PC-9 (cell line): ENCODE measurements at regions of chr7 and their contacts with region 1.

Region 1: DNA sequence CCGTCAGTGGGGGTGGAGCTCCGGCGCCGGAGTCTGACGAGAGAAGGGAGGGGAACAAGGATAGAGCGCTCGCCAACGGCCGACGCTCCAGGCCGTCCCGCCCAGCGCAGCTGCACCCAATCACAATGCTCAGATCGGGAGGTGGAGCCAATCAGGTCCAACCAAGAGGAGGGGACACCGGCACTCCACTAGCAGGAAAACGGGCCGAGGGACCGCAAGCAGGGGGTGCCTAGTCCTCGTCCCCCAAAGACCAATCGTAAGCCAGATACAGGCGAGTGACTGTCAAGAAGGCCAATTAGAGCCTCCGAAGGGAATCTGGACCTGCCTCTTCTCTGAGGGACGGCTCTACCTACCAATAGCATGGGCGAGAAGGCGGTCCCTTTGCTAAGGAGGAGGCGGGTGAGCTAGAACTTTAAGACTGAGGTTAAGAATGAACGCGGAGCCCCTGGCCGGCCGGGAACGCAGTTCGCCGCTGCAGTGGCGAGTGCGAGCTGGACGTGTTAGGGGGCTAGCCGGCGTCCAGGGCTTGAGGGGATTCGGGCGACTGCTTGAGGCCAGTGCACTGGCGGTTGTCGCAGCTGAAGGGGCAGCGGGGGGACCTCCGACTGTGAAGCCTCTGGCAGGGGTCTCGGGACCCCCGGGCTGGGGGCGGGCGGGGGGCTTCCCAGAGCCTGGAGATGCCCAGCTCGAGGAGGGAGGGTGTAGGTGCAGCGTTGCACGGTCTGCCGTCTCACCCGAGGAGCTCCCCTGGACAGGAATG is at the start of gene FBXO24:
- DNase-seq: peak; percentile 99 to 100
- H3K4me3 ChIP-seq: peak within 1 kb of the TSS; percentile 60
- H3K27ac ChIP-seq: peak within 1 kb of the TSS; percentile 75
- H3K4me1 ChIP-seq: peaks cover 19% of the 10 kb centered on the region
- H3K27me3 ChIP-seq: no peaks in the 10 kb centered on the region
- CTCF ChIP-seq: no peak
- total RNA-seq, gene FBXO24: 2.7 and 4.6 TPM in 2 replicates

Region 2: DNA sequence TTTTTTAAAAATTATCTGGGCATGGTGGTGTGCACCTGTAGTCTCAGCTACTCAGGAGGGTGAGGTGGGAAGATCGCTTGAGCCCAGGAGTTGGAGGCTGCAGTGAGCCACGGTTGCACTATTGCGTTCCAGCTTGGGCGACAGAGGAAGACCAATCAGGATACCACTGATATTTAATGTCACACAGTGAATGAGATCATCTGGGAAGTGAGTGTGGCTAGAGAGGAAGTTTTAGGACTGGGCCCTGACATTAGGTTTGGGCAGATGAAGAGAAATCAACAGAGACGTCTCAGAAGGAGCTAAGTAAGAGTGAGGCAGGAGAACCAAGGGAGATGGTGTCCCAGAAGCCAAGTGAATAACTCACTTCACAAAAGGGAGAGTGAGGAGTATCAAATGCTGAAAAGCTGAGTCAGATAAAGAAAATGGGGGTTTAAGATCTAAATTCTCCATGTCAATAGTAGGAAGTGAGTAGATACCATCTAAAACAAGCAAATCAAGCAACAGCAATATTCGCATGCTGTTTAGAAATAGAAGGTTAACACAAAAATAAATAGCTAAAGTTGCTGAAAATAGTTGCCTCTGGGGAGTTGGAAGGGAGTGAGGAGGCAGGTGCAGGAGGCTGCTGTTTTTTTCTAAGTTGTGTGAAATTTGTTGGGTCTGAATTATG is 201.7 kb before region 1 on chr7:
- CTCF ChIA-PET with region 1: no interaction called
- POLR2A ChIA-PET with region 1: no interaction called
- intact Hi-C with region 1: no loop called
- DNase-seq: no peak
- H3K4me3 ChIP-seq: no peak overlapping the region
- H3K27ac ChIP-seq: no peak overlapping the region
- H3K4me1 ChIP-seq: no peaks in the 10 kb centered on the region
- H3K27me3 ChIP-seq: peaks cover 3% of the 10 kb centered on the region; the same call in 1 of the 2 replicates
- CTCF ChIP-seq: no peak

Region 3: DNA sequence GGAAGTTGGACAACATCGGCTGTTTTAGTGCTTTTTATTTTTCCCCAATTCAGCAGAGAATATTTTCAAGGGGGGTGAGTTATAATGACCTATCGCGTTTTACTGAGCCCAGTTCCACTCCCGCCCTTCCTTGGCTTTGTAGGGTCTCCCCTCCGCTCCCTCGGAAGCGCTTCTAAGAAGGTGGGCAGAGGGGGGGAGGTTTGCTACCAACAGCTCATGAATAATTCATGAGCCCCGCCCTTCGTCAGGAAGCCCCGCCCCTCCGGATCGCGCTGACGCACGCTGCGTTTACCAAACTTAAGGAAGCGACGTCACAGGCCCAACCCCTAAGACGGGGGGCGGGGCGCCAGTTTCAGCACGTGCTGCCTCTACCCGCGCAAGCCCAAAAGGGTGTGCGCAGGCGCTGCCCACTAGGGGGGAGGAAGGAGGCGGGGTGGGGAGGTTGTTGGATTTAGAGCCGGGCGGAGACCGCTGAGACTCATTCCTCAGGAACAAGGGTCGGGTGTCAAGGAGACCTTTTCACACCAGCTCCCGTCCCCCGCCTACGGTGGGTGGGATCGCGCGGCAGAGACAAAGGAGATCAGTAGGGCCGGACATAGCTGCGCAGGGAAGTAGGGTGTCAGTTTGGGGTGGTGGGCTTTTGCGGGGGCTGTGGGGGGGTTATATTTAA is 157.3 kb before region 1 on chr7:
- CTCF ChIA-PET with region 1: interaction called, 5 read pairs
- POLR2A ChIA-PET with region 1: interaction called, 22 read pairs
- intact Hi-C with region 1: no loop called
- DNase-seq: peak; percentile 97 to 100
- H3K4me3 ChIP-seq: peak overlapping the region; percentile 66
- H3K27ac ChIP-seq: peak overlapping the region; percentile 93
- H3K4me1 ChIP-seq: peaks cover 37% of the 10 kb centered on the region
- H3K27me3 ChIP-seq: no peaks in the 10 kb centered on the region
- CTCF ChIP-seq: no peak; the same call in 1 of the 2 replicates

Region 4: GRCh38 chr7:100489824-100490223 is 96.6 kb before region 1 on chr7:
- CTCF ChIA-PET with region 1: no interaction called
- POLR2A ChIA-PET with region 1: no interaction called
- intact Hi-C with region 1: no loop called
- DNase-seq: peak; percentile 40 to 63
- H3K4me3 ChIP-seq: no peak overlapping the region
- H3K27ac ChIP-seq: no peak overlapping the region
- H3K4me1 ChIP-seq: no peaks in the 10 kb centered on the region
- H3K27me3 ChIP-seq: no peaks in the 10 kb centered on the region
- CTCF ChIP-seq: no peak

Region 5: GRCh38 chr7:100556541-100556940 is 29.9 kb before region 1 on chr7:
- CTCF ChIA-PET with region 1: interaction called, 11 read pairs
- POLR2A ChIA-PET with region 1: interaction called, 18 read pairs
- intact Hi-C with region 1: no loop called
- DNase-seq: no peak
- H3K4me3 ChIP-seq: no peak overlapping the region
- H3K27ac ChIP-seq: no peak overlapping the region
- H3K4me1 ChIP-seq: 0 out of 2 replicates have a peak, but pooled peaks cover 8% of the 10 kb centered on the region
- H3K27me3 ChIP-seq: no peaks in the 10 kb centered on the region
- CTCF ChIP-seq: no peak

Region 6: GRCh38 chr7:100604028-100604975 is 17.9 kb after region 1 on chr7:
- CTCF ChIA-PET with region 1: interaction called, 22 read pairs
- POLR2A ChIA-PET with region 1: interaction called, 8 read pairs
- intact Hi-C with region 1: loop called (anchors 2 kb)
- DNase-seq: peak; percentile 54 to 84
- H3K4me3 ChIP-seq: peak overlapping the region; percentile 75
- H3K27ac ChIP-seq: no peak overlapping the region
- H3K4me1 ChIP-seq: peaks cover 24% of the 10 kb centered on the region
- H3K27me3 ChIP-seq: no peaks in the 10 kb centered on the region
- CTCF ChIP-seq: peak; percentile 72; the same call in 1 of the 2 replicates

Region 7: GRCh38 chr7:100673300-100673941 is 87.0 kb after region 1 on chr7 and contains the start of gene GNB2:
- CTCF ChIA-PET with region 1: interaction called, 3 read pairs
- POLR2A ChIA-PET with region 1: interaction called, 4 read pairs
- intact Hi-C with region 1: loop called (anchors 1 kb)
- DNase-seq: peak; percentile 93 to 100
- H3K4me3 ChIP-seq: peak within 1 kb of the TSS; percentile 99
- H3K27ac ChIP-seq: peak within 1 kb of the TSS; percentile 75
- H3K4me1 ChIP-seq: no peaks in the 10 kb centered on the region; the same call in 1 of the 2 replicates
- H3K27me3 ChIP-seq: no peaks in the 10 kb centered on the region
- CTCF ChIP-seq: no peak
- total RNA-seq, gene GNB2: 299 and 326 TPM in 2 replicates

Region 8: DNA sequence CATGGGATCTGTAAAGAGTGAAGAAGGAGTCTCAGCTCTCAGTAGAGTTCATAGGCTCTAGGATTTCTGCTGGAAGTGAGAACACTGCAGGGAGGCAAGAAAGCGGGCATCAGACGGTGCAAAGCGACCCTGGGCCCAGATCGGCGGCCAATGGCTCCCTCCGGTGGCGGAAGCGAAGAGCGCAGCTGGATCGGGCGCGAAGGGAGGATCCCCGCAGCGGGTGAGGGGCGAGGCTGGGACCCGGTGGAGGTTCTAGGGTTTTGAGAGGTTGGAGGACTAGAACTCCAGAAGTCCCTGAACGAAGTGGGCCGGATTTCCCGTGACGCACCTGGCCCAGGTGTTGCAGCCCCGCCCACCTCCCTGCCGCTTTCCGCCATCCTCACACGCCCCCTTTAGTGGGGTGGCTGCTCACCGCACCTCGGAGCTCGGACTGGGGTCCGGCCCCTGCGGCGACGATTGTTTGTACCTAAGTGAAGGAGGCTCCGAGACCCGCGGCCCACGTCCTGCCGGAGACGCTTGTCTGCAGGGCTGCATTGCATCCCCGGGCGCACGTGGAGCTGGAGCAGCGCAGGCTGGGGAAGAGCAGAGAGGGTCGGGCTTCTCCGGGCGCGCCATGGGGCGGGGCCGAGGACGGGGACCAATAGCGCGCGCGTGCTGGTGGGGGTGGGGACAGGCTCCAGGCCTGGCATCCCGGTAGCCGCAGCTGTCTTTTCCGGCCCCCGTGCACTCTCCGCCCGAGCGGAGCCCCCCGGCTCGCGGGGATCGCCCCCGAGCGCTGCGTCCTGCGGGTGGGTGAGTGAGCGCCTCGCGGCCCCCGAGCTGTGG is 265.8 kb after region 1 on chr7 and contains the start of gene SLC12A9:
- CTCF ChIA-PET with region 1: no interaction called
- POLR2A ChIA-PET with region 1: interaction called, 25 read pairs
- intact Hi-C with region 1: no loop called
- DNase-seq: peak; percentile 76 to 93
- H3K4me3 ChIP-seq: peak within 1 kb of the TSS; percentile 97
- H3K27ac ChIP-seq: no peak within 1 kb of the TSS
- H3K4me1 ChIP-seq: peaks cover 9% of the 10 kb centered on the region
- H3K27me3 ChIP-seq: no peaks in the 10 kb centered on the region
- CTCF ChIP-seq: peak; percentile 95
- total RNA-seq, gene SLC12A9: 34.7 and 36.7 TPM in 2 replicates

Region 9: DNA sequence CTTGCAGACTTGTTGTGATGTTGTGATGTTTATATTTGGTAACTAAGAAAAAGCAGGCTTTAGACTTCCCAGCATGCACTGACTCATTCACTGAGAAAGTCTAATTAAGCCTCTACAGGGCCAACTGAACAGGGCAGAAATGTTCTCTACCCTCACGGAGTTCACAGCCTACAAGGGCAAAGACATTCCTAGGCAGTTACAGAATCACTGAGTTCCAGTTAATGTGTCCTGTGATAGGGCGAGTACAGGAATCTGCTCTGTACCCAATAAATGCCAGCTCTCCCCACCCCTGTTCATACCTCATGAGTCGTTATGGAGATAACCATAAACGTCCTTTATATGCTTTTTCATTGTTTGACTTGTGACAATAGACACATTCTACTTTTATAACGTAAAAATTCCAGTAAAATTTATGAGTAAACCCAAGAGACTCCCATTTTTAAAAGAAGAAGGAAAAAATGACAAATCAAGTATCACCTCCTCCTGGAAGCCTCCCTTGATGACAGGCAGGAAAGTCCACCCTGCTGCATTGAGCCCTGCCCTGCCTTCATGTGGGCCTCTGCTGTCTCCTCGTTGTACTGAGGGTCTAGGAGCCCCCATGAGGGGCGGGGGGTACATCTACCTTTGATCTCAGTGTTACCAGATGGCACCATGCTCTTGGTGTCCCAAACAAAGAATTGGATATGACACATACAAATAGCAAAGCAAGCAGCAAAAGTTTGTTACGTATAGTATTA is 397.2 kb after region 1 on chr7:
- CTCF ChIA-PET with region 1: no interaction called
- POLR2A ChIA-PET with region 1: no interaction called
- intact Hi-C with region 1: no loop called
- DNase-seq: peak in 1 of 2 experiments; percentile 82
- H3K4me3 ChIP-seq: no peak overlapping the region
- H3K27ac ChIP-seq: no peak overlapping the region
- H3K4me1 ChIP-seq: no peaks in the 10 kb centered on the region
- H3K27me3 ChIP-seq: peaks cover 41% of the 10 kb centered on the region; the same call in 1 of the 2 replicates
- CTCF ChIP-seq: no peak